Naive thymus-derived CD4-positive, alpha-beta T cell (primary cell): ENCODE measurements at regions of chr22 and their contacts with region 1.

Region 1: DNA sequence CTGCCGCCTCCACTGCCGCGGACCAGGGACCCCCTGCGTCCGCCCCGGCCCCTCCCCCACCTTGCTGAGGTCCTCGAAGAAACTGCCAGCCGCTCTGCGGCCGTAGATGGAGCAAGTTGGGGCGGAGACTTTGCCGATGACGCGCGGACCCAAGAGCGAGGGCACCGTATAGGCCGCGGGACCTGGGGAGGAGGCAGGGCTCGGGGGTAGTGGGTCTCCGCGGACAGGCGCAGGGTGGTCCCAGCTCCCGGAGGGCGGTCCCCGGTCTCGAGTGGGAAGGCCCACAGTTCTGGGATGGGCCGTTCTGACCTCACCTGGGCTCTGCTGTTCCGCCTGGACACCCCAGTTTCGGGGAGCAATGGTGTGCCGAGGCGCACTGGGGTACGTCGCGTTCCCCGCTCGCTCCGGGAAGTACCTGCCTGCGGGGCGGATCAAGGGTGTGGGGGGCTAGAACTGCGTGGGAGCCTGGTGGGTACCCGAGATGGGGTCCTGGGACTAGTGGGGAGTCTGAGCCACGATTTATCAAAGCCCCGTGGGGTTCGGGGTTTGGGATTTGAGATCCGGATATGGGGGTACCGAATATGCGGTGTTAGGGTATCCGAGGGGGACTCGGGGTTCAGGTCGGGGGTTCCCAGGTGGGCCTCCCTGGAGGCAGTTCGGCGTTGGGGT is 1.2 kb upstream of the TYMP start:
- DNase-seq: peak in 7 of 9 donors; percentile 46 to 85 (median 57)
- ATAC-seq: peak; percentile 60
- H3K4me3 ChIP-seq: peak overlapping the region; percentile 86
- H3K4me3 Mint-ChIP-seq: peak overlapping the region; percentile 80 to 96 (median 87)
- H3K27ac ChIP-seq: peak overlapping the region; percentile 84
- H3K27ac Mint-ChIP-seq: peak overlapping the region; percentile 67 to 100 (median 90)
- H3K4me1 ChIP-seq: peaks cover 5 to 14% of the 10 kb centered on the region in 2 donors
- H3K4me1 Mint-ChIP-seq: peaks cover 0 to 49% (median 30%) of the 10 kb centered on the region in 7 donors
- H3K27me3 ChIP-seq: no peaks in the 10 kb centered on the region
- H3K27me3 Mint-ChIP-seq: peaks cover 0 to 5% (median 0%) of the 10 kb centered on the region in 5 donors

Region 2: GRCh38 chr22:49992921-49993648 is 537.9 kb before region 1 on chr22:
- CTCF ChIA-PET with region 1: no interaction called
- POLR2A ChIA-PET with region 1: no interaction called
- intact Hi-C with region 1: no loop called
- DNase-seq: peak in 7 of 9 donors; percentile 46 to 69 (median 53)
- ATAC-seq: peak; percentile 93
- H3K4me3 ChIP-seq: no peak overlapping the region
- H3K4me3 Mint-ChIP-seq: peak overlapping the region in 4 of 10 donors; percentile 32 to 49 (median 37)
- H3K27ac ChIP-seq: no peak overlapping the region
- H3K27ac Mint-ChIP-seq: peak overlapping the region in 3 of 9 donors; percentile 11 to 63 (median 50)
- H3K4me1 ChIP-seq: peaks cover 6 to 8% of the 10 kb centered on the region in 2 donors
- H3K4me1 Mint-ChIP-seq: peaks cover 3 to 12% (median 6%) of the 10 kb centered on the region in 7 donors
- H3K27me3 ChIP-seq: no peaks in the 10 kb centered on the region
- H3K27me3 Mint-ChIP-seq: peaks cover 0 to 14% (median 0%) of the 10 kb centered on the region in 5 donors

Region 3: GRCh38 chr22:50048061-50048765 is 482.8 kb before region 1 on chr22:
- CTCF ChIA-PET with region 1: no interaction called
- POLR2A ChIA-PET with region 1: no interaction called
- intact Hi-C with region 1: no loop called
- DNase-seq: no peak
- ATAC-seq: no peak
- H3K4me3 ChIP-seq: no peak overlapping the region
- H3K4me3 Mint-ChIP-seq: no peak overlapping the region
- H3K27ac ChIP-seq: no peak overlapping the region
- H3K27ac Mint-ChIP-seq: no peak overlapping the region
- H3K4me1 ChIP-seq: no peaks in the 10 kb centered on the region
- H3K4me1 Mint-ChIP-seq: peaks cover 0 to 13% (median 11%) of the 10 kb centered on the region in 7 donors
- H3K27me3 ChIP-seq: no peaks in the 10 kb centered on the region
- H3K27me3 Mint-ChIP-seq: peaks cover 5 to 13% (median 10%) of the 10 kb centered on the region in 5 donors

Region 4: GRCh38 chr22:50544078-50544745 is 13.2 kb after region 1 on chr22:
- CTCF ChIA-PET with region 1: interaction called, 31 read pairs
- POLR2A ChIA-PET with region 1: interaction called, 127 read pairs
- intact Hi-C with region 1: loop called (anchors 1 kb)
- DNase-seq: peak; percentile 60 to 80 (median 71)
- ATAC-seq: peak; percentile 63
- H3K4me3 ChIP-seq: peak overlapping the region; percentile 67
- H3K4me3 Mint-ChIP-seq: peak overlapping the region; percentile 53 to 77 (median 70)
- H3K27ac ChIP-seq: peak overlapping the region; percentile 45
- H3K27ac Mint-ChIP-seq: peak overlapping the region in 6 of 9 donors; percentile 49 to 93 (median 75)
- H3K4me1 ChIP-seq: peaks cover 33 to 40% of the 10 kb centered on the region in 2 donors
- H3K4me1 Mint-ChIP-seq: peaks cover 31 to 59% (median 36%) of the 10 kb centered on the region in 7 donors
- H3K27me3 ChIP-seq: no peaks in the 10 kb centered on the region
- H3K27me3 Mint-ChIP-seq: no peaks in the 10 kb centered on the region